ENCODE measurements at regions of chr12 and their contacts with region 1.

Region 1: GRCh38 chr12:69059483-69060457 is 126.8 kb upstream of the CPM start:
- DNase-seq: no peak
- H3K4me3 Mint-ChIP-seq: no peak overlapping the region
- H3K27ac Mint-ChIP-seq: peak overlapping the region; percentile 54
- H3K4me1 Mint-ChIP-seq: peaks cover 39% of the 10 kb centered on the region
- H3K27me3 Mint-ChIP-seq: no peaks in the 10 kb centered on the region

Region 2: DNA sequence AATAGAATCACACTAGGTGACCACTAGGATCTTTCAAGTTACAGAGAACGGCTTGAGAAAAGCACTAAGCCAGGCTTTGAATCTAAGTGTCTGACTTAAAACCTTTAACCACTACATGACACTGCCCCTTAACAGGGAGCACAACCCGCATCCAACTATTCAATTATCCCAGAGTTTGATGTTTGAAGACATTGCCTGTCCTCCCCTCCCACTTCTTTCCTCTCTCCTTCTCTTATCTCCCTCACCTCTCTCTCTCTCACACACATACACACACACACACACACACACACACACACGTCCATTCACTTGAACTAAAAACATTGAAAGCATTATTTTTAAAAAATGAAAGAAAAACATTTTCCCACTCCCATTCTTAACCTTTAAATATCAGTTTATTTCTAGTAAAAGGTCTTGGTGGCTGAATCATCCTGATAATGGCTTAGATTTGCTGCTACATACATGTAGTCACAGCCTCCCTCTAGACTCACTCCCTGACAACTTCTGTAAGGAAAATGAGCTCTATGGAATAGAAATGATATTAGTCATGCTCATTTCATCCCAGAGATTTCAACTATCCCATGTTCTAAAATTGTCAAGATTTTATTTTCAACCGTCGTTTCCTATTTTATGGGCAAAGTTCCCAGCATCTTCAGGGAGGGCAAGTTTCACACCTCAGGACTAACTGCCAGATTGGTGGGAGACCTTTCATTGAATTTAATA is 502.6 kb before region 1 on chr12:
- intact Hi-C with region 1: no loop called
- DNase-seq: no peak
- H3K4me3 Mint-ChIP-seq: no peak overlapping the region
- H3K27ac Mint-ChIP-seq: no peak overlapping the region
- H3K4me1 Mint-ChIP-seq: peaks cover 26% of the 10 kb centered on the region
- H3K27me3 Mint-ChIP-seq: peaks cover 12% of the 10 kb centered on the region

Region 3: GRCh38 chr12:68831272-68831671 is 228.5 kb before region 1 on chr12:
- intact Hi-C with region 1: no loop called
- DNase-seq: no peak
- H3K4me3 Mint-ChIP-seq: no peak overlapping the region
- H3K27ac Mint-ChIP-seq: no peak overlapping the region
- H3K4me1 Mint-ChIP-seq: peaks cover 29% of the 10 kb centered on the region
- H3K27me3 Mint-ChIP-seq: no peaks in the 10 kb centered on the region

Region 4: DNA sequence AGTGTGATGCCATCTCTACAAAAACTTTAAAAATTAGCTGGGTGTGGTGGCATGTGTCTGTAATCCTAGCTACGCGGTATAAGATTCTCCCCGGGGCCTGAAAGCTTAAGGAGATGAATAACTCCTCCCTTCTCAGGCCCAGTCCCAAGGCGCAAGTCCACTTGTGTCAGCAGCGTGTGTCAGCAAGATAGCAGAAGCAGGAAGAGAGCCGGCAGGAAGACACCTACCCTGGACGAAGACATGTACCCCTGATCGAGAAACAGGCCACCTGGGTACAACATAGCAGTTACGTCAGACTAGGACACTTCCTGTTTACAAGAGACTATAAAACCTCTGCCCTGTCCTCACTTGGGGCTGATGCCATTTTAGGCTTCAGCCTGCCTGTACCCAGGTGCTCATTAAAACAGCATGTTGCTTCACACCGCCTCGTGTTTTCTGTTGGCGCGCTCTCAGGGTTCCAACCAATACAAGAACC is 170.1 kb before region 1 on chr12:
- intact Hi-C with region 1: loop called (anchors 2 kb)
- DNase-seq: no peak
- H3K4me3 Mint-ChIP-seq: no peak overlapping the region
- H3K27ac Mint-ChIP-seq: no peak overlapping the region
- H3K4me1 Mint-ChIP-seq: peaks cover 45% of the 10 kb centered on the region
- H3K27me3 Mint-ChIP-seq: no peaks in the 10 kb centered on the region

Region 5: DNA sequence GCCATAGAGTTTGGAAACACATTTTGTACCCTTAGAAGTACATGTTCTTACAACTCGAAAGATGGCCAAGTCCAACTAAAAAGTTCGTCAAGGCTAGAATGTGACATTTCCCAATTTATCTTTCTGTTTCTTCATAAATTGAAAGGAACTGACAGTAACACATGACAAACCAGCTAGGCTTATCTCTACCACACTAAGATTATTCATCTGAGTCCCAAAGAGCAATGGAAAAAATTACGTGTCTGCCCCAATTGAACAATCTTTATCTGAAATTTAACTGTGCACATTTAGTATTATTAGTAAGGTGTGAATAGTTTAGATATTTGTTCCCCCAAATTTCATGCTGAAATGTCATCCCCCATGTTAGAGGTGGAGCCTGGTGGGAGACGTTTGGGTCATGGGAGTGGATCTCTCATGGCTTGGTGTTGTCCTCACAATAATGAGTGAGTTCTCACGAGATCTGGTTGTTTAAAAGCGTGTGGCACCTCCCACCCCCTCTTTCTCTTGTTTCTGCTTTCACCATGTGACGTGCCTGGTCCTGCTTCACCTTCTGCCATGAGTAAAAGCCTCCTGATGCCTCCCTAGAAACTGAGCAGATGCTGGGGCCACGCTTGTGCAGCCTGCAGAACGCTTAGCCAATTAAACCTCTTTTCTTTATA is 140.1 kb before region 1 on chr12:
- intact Hi-C with region 1: loop called (anchors 1 kb)
- DNase-seq: no peak
- H3K4me3 Mint-ChIP-seq: no peak overlapping the region
- H3K27ac Mint-ChIP-seq: no peak overlapping the region
- H3K4me1 Mint-ChIP-seq: peaks cover 30% of the 10 kb centered on the region
- H3K27me3 Mint-ChIP-seq: no peaks in the 10 kb centered on the region

Region 6: DNA sequence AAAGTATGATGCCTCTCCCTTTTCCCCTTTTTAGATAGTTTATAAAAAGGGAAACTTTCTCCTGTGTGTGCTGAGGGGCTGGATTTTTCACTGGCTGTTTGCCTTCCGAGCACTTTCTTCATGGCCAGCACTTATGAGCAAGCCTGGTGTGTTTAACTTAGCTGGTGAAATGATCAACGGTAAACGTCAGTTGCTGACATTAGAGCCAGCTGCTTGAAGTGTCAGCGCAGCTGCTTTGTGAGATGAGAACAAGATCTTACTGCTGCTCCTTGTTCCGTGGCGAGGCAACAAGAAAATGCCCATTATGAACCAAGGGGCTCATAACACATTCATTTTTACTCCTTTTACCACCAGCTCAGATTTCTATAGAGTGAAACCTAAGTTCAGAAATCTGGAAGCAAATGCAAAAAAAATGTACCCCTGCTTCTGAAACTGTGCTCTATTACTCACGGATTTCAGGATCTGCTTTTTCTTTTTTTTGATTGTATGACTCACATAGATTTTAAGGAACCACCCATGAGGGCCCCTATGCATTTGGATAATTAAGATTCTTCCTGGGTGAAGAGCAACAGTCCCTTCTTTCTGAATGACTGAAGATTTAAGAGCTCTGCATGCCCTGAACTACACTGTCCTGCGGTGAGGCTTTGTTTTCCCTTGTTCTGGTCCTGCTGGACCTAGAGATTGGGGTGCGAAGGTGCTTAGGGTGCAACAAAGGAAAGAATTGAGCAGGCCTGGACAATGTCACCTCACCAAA is 52.5 kb before region 1 on chr12:
- intact Hi-C with region 1: loop called (anchors 5 kb)
- DNase-seq: no peak
- H3K4me3 Mint-ChIP-seq: no peak overlapping the region
- H3K27ac Mint-ChIP-seq: peak overlapping the region; percentile 21
- H3K4me1 Mint-ChIP-seq: peaks cover 14% of the 10 kb centered on the region
- H3K27me3 Mint-ChIP-seq: peaks cover 8% of the 10 kb centered on the region

Measured in activated T-helper 1 cell treated with anti-CD3 and anti-CD28 coated beads, Interleukin-12 subunit alpha, Interleukin-12 subunit beta, Interleukin-2, Interleukin-4 antibody, amounts not matched to agents 30 ng/mL and 10 ng/mL and 1 ng/mL, durations not matched to agents 14 hours and 24 hours and 36 hours (primary cell).